CD4-positive, alpha-beta memory T cell (primary cell): ENCODE measurements at regions of chr19 and their contacts with region 1.

Region 1: GRCh38 chr19:46753420-46754155 is 7.3 kb upstream of the STRN4 start:
- DNase-seq: peak; percentile 62 to 80 (median 68)
- H3K4me3 ChIP-seq: no peak overlapping the region
- H3K4me3 Mint-ChIP-seq: no peak overlapping the region
- H3K27ac ChIP-seq: no peak overlapping the region
- H3K27ac Mint-ChIP-seq: peak overlapping the region in 5 of 7 donors; percentile 22 to 73 (median 57)
- H3K4me1 ChIP-seq: no peaks in the 10 kb centered on the region
- H3K4me1 Mint-ChIP-seq: peaks cover 6 to 13% (median 10%) of the 10 kb centered on the region in 4 donors
- H3K27me3 ChIP-seq: no peaks in the 10 kb centered on the region
- H3K27me3 Mint-ChIP-seq: no peaks in the 10 kb centered on the region

Region 2: GRCh38 chr19:46741447-46741846 is 12.1 kb before region 1 on chr19:
- CTCF ChIA-PET with region 1: interaction called, 14 read pairs
- POLR2A ChIA-PET with region 1: no interaction called
- intact Hi-C with region 1: no loop called
- DNase-seq: no peak
- H3K4me3 ChIP-seq: no peak overlapping the region
- H3K4me3 Mint-ChIP-seq: peak overlapping the region in 1 of 8 donors; percentile 20
- H3K27ac ChIP-seq: no peak overlapping the region
- H3K27ac Mint-ChIP-seq: no peak overlapping the region
- H3K4me1 ChIP-seq: peaks cover 40% of the 10 kb centered on the region
- H3K4me1 Mint-ChIP-seq: peaks cover 35 to 63% (median 43%) of the 10 kb centered on the region in 4 donors
- H3K27me3 ChIP-seq: no peaks in the 10 kb centered on the region
- H3K27me3 Mint-ChIP-seq: no peaks in the 10 kb centered on the region

Region 3: DNA sequence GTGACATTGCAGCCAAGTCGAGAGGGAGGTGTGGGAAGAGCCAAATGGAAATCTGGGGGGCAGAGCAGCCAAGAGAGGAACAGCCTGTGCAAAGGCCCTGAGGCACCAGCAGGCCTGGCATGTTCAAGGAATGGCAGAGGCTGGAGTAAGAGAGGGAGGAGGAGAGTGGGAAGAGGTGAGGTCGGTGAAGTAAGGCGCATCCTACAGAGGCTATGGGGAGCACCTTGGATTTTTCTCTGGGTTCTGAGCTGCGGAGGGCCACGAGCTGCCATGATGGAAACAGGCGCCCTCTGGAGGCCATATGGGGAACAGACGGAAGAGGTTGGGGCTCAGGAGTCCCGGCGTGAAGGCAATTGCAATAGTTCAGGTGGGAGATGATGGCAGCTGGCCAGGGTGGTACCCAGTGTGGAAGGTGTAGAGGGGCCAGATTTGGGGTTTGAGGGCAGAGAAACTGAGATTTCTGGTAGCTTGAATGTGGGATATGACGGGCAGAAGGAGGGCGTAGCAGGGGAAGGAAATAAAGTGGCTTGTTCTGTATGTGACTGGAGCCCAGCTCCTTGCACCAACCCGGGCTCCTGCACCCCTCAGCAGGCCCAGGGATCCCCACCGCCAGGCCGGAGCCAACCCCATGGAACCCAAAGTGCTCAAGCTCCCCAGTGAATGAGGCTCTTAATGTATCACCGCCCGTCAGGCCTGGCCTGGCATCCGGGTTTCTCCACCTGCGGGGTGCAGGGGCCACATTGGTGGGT is 13.2 kb after region 1 on chr19:
- CTCF ChIA-PET with region 1: interaction called, 37 read pairs
- POLR2A ChIA-PET with region 1: no interaction called
- intact Hi-C with region 1: no loop called
- DNase-seq: peak; percentile 51 to 66 (median 58)
- H3K4me3 ChIP-seq: no peak overlapping the region
- H3K4me3 Mint-ChIP-seq: peak overlapping the region in 1 of 8 donors; percentile 39
- H3K27ac ChIP-seq: no peak overlapping the region
- H3K27ac Mint-ChIP-seq: peak overlapping the region in 1 of 7 donors; percentile 53
- H3K4me1 ChIP-seq: no peaks in the 10 kb centered on the region
- H3K4me1 Mint-ChIP-seq: peaks cover 2 to 6% (median 5%) of the 10 kb centered on the region in 4 donors
- H3K27me3 ChIP-seq: no peaks in the 10 kb centered on the region
- H3K27me3 Mint-ChIP-seq: no peaks in the 10 kb centered on the region

Region 4: GRCh38 chr19:46821498-46822409 is 68.2 kb after region 1 on chr19:
- CTCF ChIA-PET with region 1: interaction called, 19 read pairs
- POLR2A ChIA-PET with region 1: interaction called, 3 read pairs
- intact Hi-C with region 1: no loop called
- DNase-seq: peak; percentile 48 to 75 (median 52)
- H3K4me3 ChIP-seq: no peak overlapping the region
- H3K4me3 Mint-ChIP-seq: peak overlapping the region in 6 of 8 donors; percentile 20 to 72 (median 56)
- H3K27ac ChIP-seq: peak overlapping the region; percentile 34
- H3K27ac Mint-ChIP-seq: peak overlapping the region; percentile 73 to 95 (median 92)
- H3K4me1 ChIP-seq: peaks cover 29% of the 10 kb centered on the region
- H3K4me1 Mint-ChIP-seq: peaks cover 15 to 43% (median 31%) of the 10 kb centered on the region in 4 donors
- H3K27me3 ChIP-seq: no peaks in the 10 kb centered on the region
- H3K27me3 Mint-ChIP-seq: no peaks in the 10 kb centered on the region

Region 5: DNA sequence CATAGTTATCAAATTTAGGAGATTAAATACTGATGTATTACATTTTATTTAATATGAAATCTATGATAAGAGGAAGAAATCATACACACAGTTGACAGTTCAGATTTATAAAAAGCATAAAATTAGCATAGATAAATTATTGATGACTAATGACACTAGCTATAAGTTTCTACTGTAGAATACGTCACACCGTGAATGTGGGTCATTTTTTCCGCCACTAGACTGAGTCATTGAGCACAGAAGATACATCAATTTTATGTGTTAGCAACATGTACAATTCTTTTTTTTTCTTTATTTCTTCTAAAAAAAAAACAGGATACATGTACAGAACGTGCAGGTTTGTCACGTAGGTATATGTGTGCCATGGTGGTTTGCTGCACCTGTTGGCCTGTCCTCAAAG is 74.9 kb after region 1 on chr19:
- CTCF ChIA-PET with region 1: interaction called, 14 read pairs
- POLR2A ChIA-PET with region 1: no interaction called
- intact Hi-C with region 1: no loop called
- DNase-seq: peak in 1 of 5 donors; percentile 56
- H3K4me3 ChIP-seq: no peak overlapping the region
- H3K4me3 Mint-ChIP-seq: no peak overlapping the region
- H3K27ac ChIP-seq: no peak overlapping the region
- H3K27ac Mint-ChIP-seq: no peak overlapping the region
- H3K4me1 ChIP-seq: no peaks in the 10 kb centered on the region
- H3K4me1 Mint-ChIP-seq: peaks cover 0 to 8% (median 3%) of the 10 kb centered on the region in 4 donors
- H3K27me3 ChIP-seq: no peaks in the 10 kb centered on the region
- H3K27me3 Mint-ChIP-seq: no peaks in the 10 kb centered on the region

Region 6: GRCh38 chr19:47081111-47081510 is 327.5 kb after region 1 on chr19:
- CTCF ChIA-PET with region 1: no interaction called
- POLR2A ChIA-PET with region 1: no interaction called
- intact Hi-C with region 1: no loop called
- DNase-seq: no peak
- H3K4me3 ChIP-seq: no peak overlapping the region
- H3K4me3 Mint-ChIP-seq: no peak overlapping the region
- H3K27ac ChIP-seq: no peak overlapping the region
- H3K27ac Mint-ChIP-seq: peak overlapping the region in 1 of 7 donors; percentile 24
- H3K4me1 ChIP-seq: no peaks in the 10 kb centered on the region
- H3K4me1 Mint-ChIP-seq: peaks cover 0 to 4% (median 0%) of the 10 kb centered on the region in 4 donors
- H3K27me3 ChIP-seq: no peaks in the 10 kb centered on the region
- H3K27me3 Mint-ChIP-seq: no peaks in the 10 kb centered on the region

Region 7: DNA sequence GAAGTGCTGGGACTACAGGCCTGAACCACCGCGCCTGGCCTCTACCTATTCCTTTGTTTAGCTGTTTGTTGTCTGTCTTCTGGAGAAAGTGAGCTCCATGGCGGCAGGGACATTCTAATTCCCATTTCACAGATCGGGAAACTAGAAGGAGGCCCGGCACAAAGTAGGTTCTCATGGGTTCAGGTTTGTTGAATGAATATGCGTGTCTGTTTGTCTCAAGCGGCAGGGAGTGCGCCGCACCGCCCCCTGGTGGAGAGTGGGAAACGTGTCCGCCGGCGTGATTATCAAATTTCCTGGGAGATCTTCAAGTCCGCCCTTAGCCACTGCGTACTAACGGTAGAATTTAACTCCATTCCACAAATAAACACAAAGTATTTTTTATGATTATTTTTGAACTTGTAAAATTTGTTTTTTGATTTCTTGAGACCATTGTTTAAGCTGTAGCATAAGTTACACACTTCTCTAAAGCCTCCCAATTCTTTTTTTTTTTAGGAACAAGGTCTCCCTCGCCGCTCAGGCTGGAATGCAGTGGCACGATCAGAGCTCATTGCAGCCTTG is 493.8 kb after region 1 on chr19:
- CTCF ChIA-PET with region 1: no interaction called
- POLR2A ChIA-PET with region 1: no interaction called
- intact Hi-C with region 1: no loop called
- DNase-seq: peak; percentile 68 to 74 (median 74)
- H3K4me3 ChIP-seq: no peak overlapping the region
- H3K4me3 Mint-ChIP-seq: peak overlapping the region in 1 of 8 donors; percentile 11
- H3K27ac ChIP-seq: no peak overlapping the region
- H3K27ac Mint-ChIP-seq: peak overlapping the region in 4 of 7 donors; percentile 39 to 88 (median 66)
- H3K4me1 ChIP-seq: peaks cover 19% of the 10 kb centered on the region
- H3K4me1 Mint-ChIP-seq: peaks cover 6 to 22% (median 19%) of the 10 kb centered on the region in 4 donors
- H3K27me3 ChIP-seq: no peaks in the 10 kb centered on the region
- H3K27me3 Mint-ChIP-seq: no peaks in the 10 kb centered on the region